A549 (cell line): ENCODE measurements at regions of chr5 and their contacts with region 1.

Region 1: DNA sequence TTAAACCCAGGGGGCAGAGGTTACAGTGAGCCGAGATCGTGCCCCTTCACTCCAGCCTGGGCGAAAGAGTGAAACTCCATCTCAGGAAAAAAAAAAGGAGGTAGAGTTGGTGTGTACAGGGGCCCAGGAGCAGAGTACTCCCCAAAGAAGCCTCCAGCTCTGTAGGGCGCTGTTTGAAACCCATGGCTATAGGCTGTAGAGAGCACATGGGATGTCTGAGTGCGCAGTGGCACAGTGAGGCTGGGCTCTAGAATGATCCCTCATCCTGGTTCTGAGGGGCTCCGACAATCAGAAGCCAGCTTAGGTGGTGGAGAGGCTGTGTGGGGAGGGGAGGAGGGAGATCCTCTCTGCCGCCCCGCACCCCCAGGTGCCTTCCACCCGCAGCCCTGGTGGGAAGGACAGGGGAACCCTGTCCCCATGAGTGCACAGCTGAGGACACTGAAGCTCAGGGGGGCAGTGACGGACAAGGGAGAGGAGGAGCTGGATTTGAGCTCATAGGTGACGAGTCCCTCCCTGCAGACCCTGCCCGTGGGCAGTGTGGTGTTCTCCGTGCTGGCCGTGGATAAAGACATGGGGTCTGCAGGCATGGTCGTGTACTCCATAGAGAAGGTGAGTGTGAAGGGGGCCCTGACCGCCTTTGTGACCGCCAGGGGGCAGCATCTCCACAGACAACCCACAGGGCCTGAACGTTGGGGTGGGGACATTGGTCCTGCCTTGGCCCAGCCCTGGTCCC is 24.6 kb downstream of the CDHR2 start:
- DNase-seq: peak; percentile 58 to 70
- ATAC-seq: peak; percentile 60 to 87; a peak in 5 of 6 replicates
- H3K4me3 ChIP-seq: no peak overlapping the region
- H3K27ac ChIP-seq: no peak overlapping the region
- H3K4me1 ChIP-seq: 0 out of 3 replicates have a peak, but pooled peaks cover 6% of the 10 kb centered on the region
- CTCF ChIP-seq: peak; percentile 75
- EP300 ChIP-seq: no peak
- POLR2A ChIP-seq: no peak
- RAD21 ChIP-seq: peak; percentile 80

Region 2: DNA sequence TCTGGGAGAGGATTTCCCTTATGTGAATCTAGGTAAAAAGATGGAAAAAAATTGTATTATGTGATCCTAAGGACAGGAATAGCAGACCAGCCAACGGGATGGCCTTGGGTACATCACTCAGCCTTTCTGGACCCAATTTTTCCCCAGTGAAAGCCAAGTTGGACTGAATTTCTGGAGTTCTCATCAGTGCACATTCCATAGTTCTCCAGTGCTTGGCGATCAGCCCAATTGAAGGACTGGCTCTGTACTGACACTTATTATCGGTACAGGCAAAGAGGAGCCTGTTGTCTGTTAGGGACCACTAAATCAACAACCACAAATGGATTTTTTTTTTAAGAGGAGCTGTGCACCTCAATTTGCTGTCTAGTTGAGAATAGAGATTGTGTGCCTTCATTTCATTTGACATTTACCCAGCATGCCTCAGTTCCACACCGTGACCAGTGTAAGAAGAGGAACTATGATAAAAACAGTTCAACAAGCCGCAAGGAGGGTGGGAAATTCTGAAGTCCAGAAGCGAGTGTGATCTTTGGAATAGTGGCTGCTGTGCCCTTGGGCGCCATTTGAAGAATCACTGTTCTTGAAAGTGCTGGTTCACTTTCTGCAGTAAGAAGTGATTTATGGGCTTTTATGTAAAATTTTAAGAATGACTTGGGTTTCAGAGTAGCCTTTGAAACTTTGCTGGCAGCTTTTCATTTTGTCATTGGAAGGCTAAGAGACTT is 200.5 kb before region 1 on chr5:
- CTCF ChIA-PET with region 1: no interaction called
- POLR2A ChIA-PET with region 1: no interaction called
- DNase-seq: no peak
- ATAC-seq: no peak
- H3K4me3 ChIP-seq: no peak overlapping the region
- H3K27ac ChIP-seq: no peak overlapping the region
- H3K4me1 ChIP-seq: no peaks in the 10 kb centered on the region
- CTCF ChIP-seq: no peak
- EP300 ChIP-seq: no peak
- POLR2A ChIP-seq: no peak
- RAD21 ChIP-seq: no peak

Region 3: DNA sequence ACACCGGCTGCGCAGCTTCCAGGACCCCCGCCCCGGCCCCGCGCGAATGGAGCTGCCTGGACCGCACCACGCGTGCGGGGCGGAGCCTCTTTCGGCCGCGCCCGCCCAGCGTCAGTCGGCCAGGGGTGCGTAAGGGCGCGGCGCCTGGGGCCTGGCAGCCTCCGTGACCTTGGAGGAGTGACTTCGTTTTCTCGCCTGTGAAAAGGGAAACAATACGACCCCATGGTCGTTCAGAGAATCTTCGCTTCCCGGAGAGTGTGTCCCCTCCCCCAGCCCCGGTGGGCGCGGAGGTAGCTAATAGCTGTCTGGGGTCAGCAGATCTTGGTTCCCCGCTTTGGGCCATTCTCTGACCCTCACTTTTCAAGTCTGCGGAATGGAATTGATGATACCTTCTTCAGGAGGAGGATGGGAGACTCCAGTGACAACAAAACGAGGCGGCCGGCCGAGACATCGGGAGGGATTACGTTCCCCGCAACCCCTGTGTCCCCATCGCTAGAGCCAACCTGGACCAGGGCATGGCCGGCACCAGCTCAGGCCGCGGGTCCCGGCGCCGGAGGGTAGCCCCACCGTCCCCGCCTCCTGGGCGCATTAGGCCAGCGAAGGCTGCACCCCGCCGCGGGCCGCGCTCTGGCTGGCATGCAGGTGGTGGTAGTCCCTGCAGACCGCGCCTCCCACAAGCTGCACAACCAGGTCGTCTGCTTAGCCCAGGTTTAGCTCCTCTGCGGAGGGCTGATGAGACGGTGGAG is 30.1 kb before region 1 on chr5:
- CTCF ChIA-PET with region 1: interaction called, 19 read pairs
- POLR2A ChIA-PET with region 1: no interaction called
- DNase-seq: peak; percentile 53 to 73
- ATAC-seq: peak; percentile 77 to 86
- H3K4me3 ChIP-seq: peak overlapping the region; percentile 66
- H3K27ac ChIP-seq: peak overlapping the region; percentile 89 to 95
- H3K4me1 ChIP-seq: peaks cover 51% of the 10 kb centered on the region
- CTCF ChIP-seq: no peak
- EP300 ChIP-seq: no peak
- POLR2A ChIP-seq: peak; percentile 78
- RAD21 ChIP-seq: no peak

Region 4: GRCh38 chr5:176590035-176590717 is 16.4 kb after region 1 on chr5:
- CTCF ChIA-PET with region 1: interaction called, 39 read pairs
- POLR2A ChIA-PET with region 1: no interaction called
- DNase-seq: no peak
- ATAC-seq: no peak
- H3K4me3 ChIP-seq: no peak overlapping the region
- H3K27ac ChIP-seq: no peak overlapping the region
- H3K4me1 ChIP-seq: no peaks in the 10 kb centered on the region
- CTCF ChIP-seq: no peak
- EP300 ChIP-seq: no peak
- POLR2A ChIP-seq: no peak
- RAD21 ChIP-seq: no peak

Region 5: GRCh38 chr5:176629853-176630712 is 56.4 kb after region 1 on chr5 and contains the starts of genes EIF4E1B and SNCB:
- CTCF ChIA-PET with region 1: interaction called, 15 read pairs
- POLR2A ChIA-PET with region 1: no interaction called
- DNase-seq: peak; percentile 37 to 64
- ATAC-seq: peak; percentile 75 to 92
- H3K4me3 ChIP-seq: peak within 1 kb of the TSS; percentile 53
- H3K27ac ChIP-seq: peak within 1 kb of the TSS in 1 of 2 experiments; percentile 65; a peak in 2 of 6 replicates
- H3K4me1 ChIP-seq: peaks cover 8% of the 10 kb centered on the region; the same call in 1 of the 3 replicates
- CTCF ChIP-seq: no peak
- EP300 ChIP-seq: no peak
- POLR2A ChIP-seq: no peak
- RAD21 ChIP-seq: no peak
- polyA plus RNA-seq, gene EIF4E1B: not detected in 2 replicates
- polyA plus RNA-seq, gene SNCB: 0.26 and 0.37 TPM in 2 replicates